SK-N-SH (cell line): ENCODE measurements at regions of chr17 and their contacts with region 1.

Region 1: DNA sequence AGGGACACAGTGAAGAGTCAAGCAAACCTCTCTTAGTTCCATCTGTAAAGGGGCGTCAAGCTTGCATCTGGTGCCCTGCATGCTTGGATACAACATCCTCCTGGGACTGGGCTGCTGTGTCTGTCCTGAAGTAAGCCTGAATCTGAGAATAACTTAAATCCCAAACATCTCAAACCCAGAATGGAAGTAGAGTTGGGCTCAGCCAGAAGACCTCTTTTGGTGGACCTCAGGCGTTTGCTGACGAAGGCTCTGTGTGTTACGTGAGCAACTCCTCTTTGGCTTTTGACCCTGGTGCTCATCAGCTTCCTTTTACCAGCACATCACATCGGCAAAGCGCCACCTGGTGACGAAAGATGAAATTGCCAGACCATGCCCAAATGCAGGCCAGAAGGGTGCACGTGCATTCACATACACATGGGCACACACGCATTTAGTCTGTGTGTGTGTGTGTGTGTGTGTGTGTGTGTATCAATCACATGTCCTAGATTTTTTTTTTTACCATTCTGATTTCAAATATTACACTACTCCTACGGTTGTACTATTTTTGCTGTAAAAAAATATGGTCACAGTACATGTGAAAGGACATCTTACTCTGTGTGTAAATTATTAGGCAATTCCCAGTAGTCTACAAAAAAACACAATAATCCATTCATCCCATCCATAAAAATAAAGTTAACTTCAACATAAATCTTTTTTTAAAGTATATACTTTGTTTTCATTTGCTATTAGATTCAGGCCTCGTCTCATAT is 41.1 kb upstream of the FOXJ1 start:
- DNase-seq: peak; percentile 94
- H3K4me3 ChIP-seq: no peak overlapping the region; a peak in 1 of 4 replicates
- H3K27ac ChIP-seq: no peak overlapping the region
- H3K4me1 ChIP-seq: peaks cover 0 to 3% of the 10 kb centered on the region in 2 experiments; a peak in 1 of 4 replicates
- H3K27me3 ChIP-seq: no peaks in the 10 kb centered on the region
- CTCF ChIP-seq: peak; percentile 99
- EP300 ChIP-seq: peak in 1 of 2 experiments; percentile 31; a peak in 1 of 4 replicates
- RAD21 ChIP-seq: peak; percentile 76

Region 2: GRCh38 chr17:75970011-75970523 is 212.1 kb before region 1 on chr17:
- CTCF ChIA-PET with region 1: no interaction called
- POLR2A ChIA-PET with region 1: no interaction called
- DNase-seq: peak; percentile 53
- H3K4me3 ChIP-seq: no peak overlapping the region
- H3K27ac ChIP-seq: peak overlapping the region in 1 of 2 experiments; percentile 12; a peak in 1 of 4 replicates
- H3K4me1 ChIP-seq: peaks cover 0 to 3% of the 10 kb centered on the region in 2 experiments; a peak in 1 of 4 replicates
- H3K27me3 ChIP-seq: no peaks in the 10 kb centered on the region
- CTCF ChIP-seq: no peak
- EP300 ChIP-seq: no peak
- RAD21 ChIP-seq: no peak

Region 3: GRCh38 chr17:76121932-76122430 is 60.2 kb before region 1 on chr17:
- CTCF ChIA-PET with region 1: interaction called, 193 read pairs
- POLR2A ChIA-PET with region 1: no interaction called
- DNase-seq: no peak
- H3K4me3 ChIP-seq: no peak overlapping the region
- H3K27ac ChIP-seq: no peak overlapping the region
- H3K4me1 ChIP-seq: no peaks in the 10 kb centered on the region; a peak in 1 of 4 replicates
- H3K27me3 ChIP-seq: no peaks in the 10 kb centered on the region
- CTCF ChIP-seq: no peak
- EP300 ChIP-seq: no peak
- RAD21 ChIP-seq: no peak

Region 4: DNA sequence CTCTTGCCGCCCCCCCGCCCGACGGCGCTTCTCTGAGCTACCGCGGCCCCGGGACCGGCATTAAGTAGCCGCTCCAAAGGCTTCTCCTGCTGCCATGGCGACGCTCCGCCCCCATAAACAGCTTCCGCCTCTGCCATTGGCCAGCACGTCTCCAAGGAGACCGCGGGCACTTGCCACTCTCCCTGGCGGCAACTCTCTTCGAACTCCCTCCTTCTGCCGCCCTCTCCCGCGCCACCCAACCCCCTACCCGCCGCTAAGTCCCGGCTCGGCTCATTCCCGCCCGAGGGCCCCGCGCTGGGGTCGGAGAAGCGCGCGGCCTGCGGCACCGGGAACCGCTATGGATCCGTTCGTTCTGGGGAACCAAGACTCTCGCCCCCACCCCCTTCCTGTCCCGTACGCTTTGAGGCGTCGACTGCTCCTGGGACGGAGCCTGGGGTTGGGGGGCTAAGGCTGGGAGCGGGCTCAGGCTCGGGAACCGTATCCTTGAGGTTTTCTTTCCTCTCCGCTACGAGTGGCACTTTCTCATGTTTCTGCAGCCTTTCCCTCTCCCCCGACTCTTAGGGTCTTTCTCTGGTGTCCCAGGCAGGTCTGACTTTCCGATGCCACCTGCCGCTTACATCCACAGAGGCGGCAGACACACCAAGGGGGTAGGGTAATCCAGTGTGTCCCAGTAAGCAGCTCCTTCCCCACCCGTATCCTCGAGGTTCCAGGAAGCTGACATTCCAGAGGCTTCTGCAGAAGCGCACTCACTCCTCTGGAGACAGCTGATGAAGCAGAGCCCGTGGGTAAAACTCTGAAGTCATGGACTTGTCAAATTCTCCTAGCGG is 40.8 kb before region 1 on chr17 and contains the start of gene FOXJ1:
- CTCF ChIA-PET with region 1: interaction called, 23 read pairs
- POLR2A ChIA-PET with region 1: no interaction called
- DNase-seq: peak; percentile 100
- H3K4me3 ChIP-seq: peak within 1 kb of the TSS; percentile 55 to 63
- H3K27ac ChIP-seq: no peak within 1 kb of the TSS
- H3K4me1 ChIP-seq: peaks cover 0 to 16% of the 10 kb centered on the region in 2 experiments; a peak in 2 of 4 replicates
- H3K27me3 ChIP-seq: peaks cover 20% of the 10 kb centered on the region; the same call in 1 of the 2 replicates
- CTCF ChIP-seq: no peak
- EP300 ChIP-seq: no peak
- RAD21 ChIP-seq: no peak
- polyA plus RNA-seq, gene FOXJ1: not detected in 2 replicates

Region 5: GRCh38 chr17:76160896-76161528 is 21.2 kb before region 1 on chr17:
- CTCF ChIA-PET with region 1: interaction called, 27 read pairs
- POLR2A ChIA-PET with region 1: no interaction called
- DNase-seq: no peak
- H3K4me3 ChIP-seq: no peak overlapping the region
- H3K27ac ChIP-seq: no peak overlapping the region
- H3K4me1 ChIP-seq: no peaks in the 10 kb centered on the region
- H3K27me3 ChIP-seq: no peaks in the 10 kb centered on the region
- CTCF ChIP-seq: no peak
- EP300 ChIP-seq: no peak
- RAD21 ChIP-seq: no peak

Region 6: GRCh38 chr17:76171706-76172105 is 10.5 kb before region 1 on chr17:
- CTCF ChIA-PET with region 1: interaction called, 64 read pairs
- POLR2A ChIA-PET with region 1: interaction called, 4 read pairs
- DNase-seq: no peak
- H3K4me3 ChIP-seq: no peak overlapping the region
- H3K27ac ChIP-seq: no peak overlapping the region
- H3K4me1 ChIP-seq: peaks cover 0 to 3% of the 10 kb centered on the region in 2 experiments; a peak in 1 of 4 replicates
- H3K27me3 ChIP-seq: no peaks in the 10 kb centered on the region
- CTCF ChIP-seq: no peak
- EP300 ChIP-seq: no peak
- RAD21 ChIP-seq: no peak

Region 7: DNA sequence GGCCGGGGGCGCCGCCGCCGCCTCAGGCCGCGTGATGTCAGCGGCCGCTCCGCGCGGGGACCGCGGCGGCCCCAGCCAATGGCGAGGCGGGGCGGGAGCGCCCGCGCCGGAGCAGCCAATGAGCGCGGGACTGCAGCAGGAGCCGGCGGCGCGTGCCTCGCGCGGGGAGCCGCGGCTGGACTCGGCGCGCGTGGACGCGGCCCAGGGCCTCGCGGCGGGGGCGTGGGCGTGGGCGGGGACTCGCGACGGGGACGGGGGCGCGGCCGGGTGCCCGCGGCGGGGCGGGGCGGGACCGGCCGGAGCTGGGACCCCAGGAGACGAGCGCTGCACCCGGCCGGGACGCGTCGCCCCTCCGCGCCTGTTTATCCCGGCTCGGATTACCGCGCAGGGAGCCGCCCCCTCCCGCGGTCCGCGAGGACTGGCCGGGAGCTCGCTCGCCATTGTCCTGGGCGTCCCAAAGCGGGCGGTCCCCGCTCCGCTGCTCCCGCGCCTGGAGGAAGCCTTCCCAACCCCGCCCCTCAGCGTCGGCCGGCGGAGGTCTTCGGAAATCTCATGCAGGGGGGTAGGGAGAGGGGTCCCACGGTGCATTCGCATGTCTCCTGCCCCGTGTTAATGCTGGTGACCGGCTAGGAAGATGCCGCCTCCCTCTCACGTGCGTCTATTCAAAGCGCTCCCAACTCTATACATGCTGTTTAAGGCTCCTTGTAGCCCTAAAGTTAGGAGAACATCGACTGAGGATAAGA is 58.4 kb after region 1 on chr17 and contains the start of gene RNF157:
- CTCF ChIA-PET with region 1: interaction called, 15 read pairs
- POLR2A ChIA-PET with region 1: no interaction called
- DNase-seq: peak; percentile 97
- H3K4me3 ChIP-seq: peak within 1 kb of the TSS; percentile 62 to 81
- H3K27ac ChIP-seq: peak within 1 kb of the TSS in 1 of 2 experiments; percentile 40; a peak in 1 of 4 replicates
- H3K4me1 ChIP-seq: peaks cover 0 to 15% of the 10 kb centered on the region in 2 experiments; a peak in 1 of 4 replicates
- H3K27me3 ChIP-seq: no peaks in the 10 kb centered on the region
- CTCF ChIP-seq: no peak
- EP300 ChIP-seq: no peak
- RAD21 ChIP-seq: no peak
- polyA plus RNA-seq, gene RNF157: 5.2 TPM in 2 replicates

Region 8: GRCh38 chr17:76597728-76598474 is 415.7 kb after region 1 on chr17:
- CTCF ChIA-PET with region 1: no interaction called
- POLR2A ChIA-PET with region 1: no interaction called
- DNase-seq: no peak
- H3K4me3 ChIP-seq: no peak overlapping the region
- H3K27ac ChIP-seq: no peak overlapping the region
- H3K4me1 ChIP-seq: peaks cover 0 to 6% of the 10 kb centered on the region in 2 experiments; a peak in 2 of 4 replicates
- H3K27me3 ChIP-seq: no peaks in the 10 kb centered on the region
- CTCF ChIP-seq: no peak
- EP300 ChIP-seq: no peak
- RAD21 ChIP-seq: no peak